ENCODE measurements at regions of chr15 and their contacts with region 1.

Region 1: DNA sequence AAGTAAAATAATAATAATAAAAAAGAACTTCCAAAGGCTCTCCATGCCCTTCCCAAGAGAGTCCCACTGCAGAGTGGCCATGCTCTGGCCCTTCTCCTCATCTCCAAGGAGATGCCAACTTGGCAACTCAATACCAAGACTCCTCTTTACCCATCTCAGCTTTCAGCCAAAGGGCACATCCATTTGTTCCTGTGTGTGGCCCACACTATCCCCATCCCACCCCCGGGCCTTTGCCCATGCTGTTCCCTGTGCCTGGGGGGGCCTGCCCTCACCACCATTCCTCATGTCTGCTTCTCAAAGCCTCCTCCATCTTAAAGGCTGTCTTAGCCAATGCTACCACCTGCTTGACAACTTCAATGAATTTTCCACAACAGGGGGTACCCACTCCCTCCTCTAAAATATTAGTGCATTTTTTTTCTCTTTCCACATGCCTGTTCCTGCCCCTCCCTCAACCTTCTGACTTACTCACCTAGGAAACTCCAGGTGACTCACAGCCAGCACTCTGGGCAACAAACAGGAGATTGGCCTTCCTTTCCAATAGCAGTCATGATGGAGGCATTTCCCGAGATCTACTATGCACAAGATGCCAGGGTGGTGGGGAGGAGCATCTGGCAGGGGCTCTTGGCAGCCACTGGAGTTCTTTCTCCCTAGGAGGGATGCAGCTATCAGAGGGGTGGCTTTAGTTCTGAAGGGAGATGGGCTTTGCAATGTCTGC is 109.4 kb upstream of the SMAD3 start:
- DNase-seq: no peak
- H3K4me3 ChIP-seq: no peak overlapping the region
- H3K27ac ChIP-seq: no peak overlapping the region
- H3K4me1 ChIP-seq: no peaks in the 10 kb centered on the region
- H3K27me3 ChIP-seq: no peaks in the 10 kb centered on the region
- CTCF ChIP-seq: no peak

Region 2: DNA sequence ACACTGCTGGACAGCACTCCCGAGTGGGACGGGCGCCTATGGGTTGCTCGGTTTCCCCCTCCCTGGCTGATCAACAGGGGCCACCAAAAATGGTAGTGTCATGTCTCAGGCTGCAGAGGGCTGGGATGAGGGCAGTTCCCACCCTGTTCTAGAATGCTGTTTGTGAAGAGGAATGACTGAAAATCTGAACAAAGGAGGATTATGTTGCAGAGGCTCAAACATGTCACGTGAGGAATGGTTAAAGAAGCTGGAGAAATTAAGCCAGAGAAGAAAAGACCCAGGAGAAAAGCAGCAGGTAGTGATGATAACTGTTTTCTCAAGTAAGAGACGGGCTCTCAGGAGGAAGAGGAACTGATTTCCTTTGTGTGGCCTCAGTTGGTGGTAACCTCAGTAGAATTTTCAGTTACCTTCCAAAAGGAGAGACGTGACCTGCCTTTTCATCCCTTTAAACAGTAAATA is 1976.7 kb before region 1 on chr15:
- intact Hi-C with region 1: no loop called
- DNase-seq: no peak
- H3K4me3 ChIP-seq: no peak overlapping the region
- H3K27ac ChIP-seq: no peak overlapping the region
- H3K4me1 ChIP-seq: peaks cover 9% of the 10 kb centered on the region
- H3K27me3 ChIP-seq: no peaks in the 10 kb centered on the region
- CTCF ChIP-seq: no peak

Region 3: GRCh38 chr15:67433495-67434099 is 477.6 kb after region 1 on chr15:
- intact Hi-C with region 1: loop called (anchors 10 kb)
- DNase-seq: peak; percentile 20
- H3K4me3 ChIP-seq: no peak overlapping the region
- H3K27ac ChIP-seq: no peak overlapping the region
- H3K4me1 ChIP-seq: no peaks in the 10 kb centered on the region
- H3K27me3 ChIP-seq: no peaks in the 10 kb centered on the region
- CTCF ChIP-seq: peak; percentile 79

Region 4: GRCh38 chr15:67762610-67763368 is 806.8 kb after region 1 on chr15:
- intact Hi-C with region 1: no loop called
- DNase-seq: no peak
- H3K4me3 ChIP-seq: no peak overlapping the region
- H3K27ac ChIP-seq: no peak overlapping the region
- H3K4me1 ChIP-seq: no peaks in the 10 kb centered on the region
- H3K27me3 ChIP-seq: no peaks in the 10 kb centered on the region
- CTCF ChIP-seq: no peak

Measured in left ventricle myocardium inferior (tissue), 1 donor.